ENCODE measurements at regions of chr2 and their contacts with region 1.

Region 1: GRCh38 chr2:64523666-64524603 is at the start of gene AFTPH:
- DNase-seq: peak; percentile 97
- ATAC-seq: peak; percentile 87
- H3K4me3 Mint-ChIP-seq: peak within 1 kb of the TSS; percentile 99
- H3K27ac Mint-ChIP-seq: peak within 1 kb of the TSS; percentile 100
- H3K4me1 Mint-ChIP-seq: peaks cover 46% of the 10 kb centered on the region
- H3K27me3 Mint-ChIP-seq: no peaks in the 10 kb centered on the region
- CTCF ChIP-seq: no peak
- total RNA-seq, gene AFTPH: 76.2 and 81.3 TPM in 2 replicates

Region 2: DNA sequence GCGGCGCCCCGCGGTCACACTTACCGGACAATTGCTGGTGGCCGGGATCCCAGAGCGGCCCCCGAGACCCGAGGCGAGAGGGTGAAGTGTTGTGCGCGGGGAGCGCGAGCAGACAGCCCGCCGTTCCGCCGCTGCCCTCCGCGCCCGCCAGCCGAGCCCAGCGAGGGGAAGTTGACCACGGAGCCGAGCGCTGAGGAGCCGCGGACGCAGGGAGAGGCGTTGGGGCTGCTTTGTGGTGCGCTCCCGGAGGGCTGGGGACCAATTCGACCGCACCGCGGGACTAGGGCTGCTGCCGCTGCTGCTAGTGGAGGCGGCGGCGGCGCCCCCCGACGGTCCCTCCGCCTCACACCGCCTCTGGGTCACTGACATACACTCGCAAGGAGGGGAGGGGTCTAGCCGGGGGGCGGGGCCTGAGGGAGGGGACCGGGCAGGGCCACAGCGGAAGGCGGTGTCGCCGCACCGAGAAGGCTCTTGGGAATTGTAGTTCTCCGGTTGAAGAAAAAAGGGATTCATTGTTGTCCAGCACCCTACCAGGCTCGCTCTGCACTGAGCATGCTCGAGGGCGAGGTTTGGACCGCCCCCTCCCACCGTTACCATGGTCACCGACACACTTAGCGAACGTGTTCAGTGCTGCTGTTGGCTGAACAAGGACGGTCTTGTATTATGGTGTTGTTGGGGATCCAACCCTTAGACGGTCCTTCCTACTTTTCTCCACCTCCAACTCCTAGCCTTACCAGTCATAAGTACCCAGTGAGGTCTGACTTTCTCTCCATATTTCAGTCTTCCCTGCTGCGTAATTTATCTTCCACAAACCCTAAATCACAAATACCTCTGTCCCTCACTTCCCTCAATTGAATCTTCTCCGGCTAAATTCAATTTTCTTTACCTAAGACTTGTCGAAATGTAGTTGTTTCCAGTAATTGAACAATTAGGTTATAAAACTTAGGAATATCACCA is 379.6 kb before region 1 on chr2 and contains the start of gene PELI1:
- CTCF ChIA-PET with region 1: no interaction called
- POLR2A ChIA-PET with region 1: no interaction called
- intact Hi-C with region 1: loop called (anchors 1 kb)
- DNase-seq: peak; percentile 83
- ATAC-seq: peak; percentile 95
- H3K4me3 Mint-ChIP-seq: peak within 1 kb of the TSS; percentile 96
- H3K27ac Mint-ChIP-seq: peak within 1 kb of the TSS; percentile 95
- H3K4me1 Mint-ChIP-seq: peaks cover 37% of the 10 kb centered on the region
- H3K27me3 Mint-ChIP-seq: no peaks in the 10 kb centered on the region
- CTCF ChIP-seq: no peak
- total RNA-seq, gene PELI1: 81.4 and 93.1 TPM in 2 replicates

Region 3: GRCh38 chr2:64562148-64562784 is 38.3 kb after region 1 on chr2:
- CTCF ChIA-PET with region 1: interaction called, 93 read pairs
- POLR2A ChIA-PET with region 1: interaction called, 13 read pairs
- intact Hi-C with region 1: loop called (anchors 1 kb)
- DNase-seq: no peak
- ATAC-seq: peak; percentile 52
- H3K4me3 Mint-ChIP-seq: no peak overlapping the region
- H3K27ac Mint-ChIP-seq: no peak overlapping the region
- H3K4me1 Mint-ChIP-seq: peaks cover 34% of the 10 kb centered on the region
- H3K27me3 Mint-ChIP-seq: no peaks in the 10 kb centered on the region
- CTCF ChIP-seq: no peak

Region 4: DNA sequence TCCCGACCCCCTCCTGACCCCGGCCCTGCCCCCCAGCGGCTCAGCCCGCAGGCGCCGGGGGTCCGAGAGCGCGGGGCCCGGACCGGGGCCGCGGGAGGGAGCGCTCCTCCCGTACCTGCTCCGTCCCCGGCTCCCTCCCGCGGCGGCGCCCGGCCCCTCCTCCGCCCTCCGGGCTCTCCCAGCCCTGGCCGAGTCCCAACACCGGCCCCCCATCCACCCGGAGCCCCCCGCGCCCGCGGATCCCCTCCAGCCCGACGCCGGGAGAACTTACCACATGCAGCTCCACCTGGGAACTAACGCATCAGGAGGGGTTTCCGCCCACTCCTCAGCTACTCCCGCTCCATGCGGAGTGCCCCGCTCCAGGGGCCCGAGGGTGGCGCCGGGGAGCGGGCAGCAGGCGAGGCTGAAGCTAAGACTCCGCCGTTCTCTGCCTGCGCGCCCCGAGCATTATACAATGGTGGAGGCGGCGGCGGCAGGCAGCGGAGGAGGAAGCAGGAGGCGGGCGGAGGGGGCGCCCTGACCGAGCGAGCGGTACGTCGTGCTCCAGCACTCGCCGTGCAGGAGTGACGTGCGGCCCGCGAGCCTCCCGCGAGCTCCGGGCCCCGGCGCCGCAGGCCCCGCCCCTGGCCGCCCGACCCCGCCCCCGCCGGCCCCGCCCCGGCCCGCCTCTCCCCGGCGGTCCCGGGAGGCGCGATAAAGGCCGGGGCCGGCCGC is 129.6 kb after region 1 on chr2 and contains the start of gene SERTAD2:
- CTCF ChIA-PET with region 1: interaction called, 5 read pairs
- POLR2A ChIA-PET with region 1: interaction called, 50 read pairs
- intact Hi-C with region 1: no loop called
- DNase-seq: peak; percentile 84
- ATAC-seq: peak; percentile 79
- H3K4me3 Mint-ChIP-seq: peak within 1 kb of the TSS; percentile 91
- H3K27ac Mint-ChIP-seq: peak within 1 kb of the TSS; percentile 93
- H3K4me1 Mint-ChIP-seq: peaks cover 82% of the 10 kb centered on the region
- H3K27me3 Mint-ChIP-seq: no peaks in the 10 kb centered on the region
- CTCF ChIP-seq: no peak
- total RNA-seq, gene SERTAD2: 45.6 and 47.3 TPM in 2 replicates

Region 5: DNA sequence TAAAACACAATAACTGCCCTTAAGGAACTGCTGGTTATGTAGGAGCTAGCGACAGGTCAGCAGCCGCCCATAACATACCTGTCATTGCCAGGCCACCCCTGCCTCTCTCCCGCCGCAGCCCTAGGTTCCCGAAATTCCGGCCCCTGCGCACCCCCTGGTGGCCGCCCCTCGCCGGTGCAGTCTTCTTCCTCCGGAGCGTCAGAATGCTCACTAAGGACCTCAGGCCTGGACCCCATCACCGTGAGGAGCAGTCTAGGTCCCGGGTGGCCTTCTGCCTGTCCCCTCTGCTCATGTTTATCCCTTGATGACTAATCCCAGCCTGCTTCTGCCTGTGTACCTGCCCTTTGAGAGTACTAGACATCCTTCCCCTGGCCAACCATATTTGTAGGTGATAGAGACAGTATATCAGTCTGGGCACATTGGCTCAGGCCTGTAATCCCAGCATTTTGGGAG is 349.6 kb after region 1 on chr2:
- CTCF ChIA-PET with region 1: interaction called, 13 read pairs
- POLR2A ChIA-PET with region 1: interaction called, 7 read pairs
- intact Hi-C with region 1: loop called (anchors 1 kb)
- DNase-seq: peak; percentile 86
- ATAC-seq: peak; percentile 99
- H3K4me3 Mint-ChIP-seq: peak overlapping the region; percentile 52
- H3K27ac Mint-ChIP-seq: no peak overlapping the region
- H3K4me1 Mint-ChIP-seq: peaks cover 8% of the 10 kb centered on the region
- H3K27me3 Mint-ChIP-seq: no peaks in the 10 kb centered on the region
- CTCF ChIP-seq: peak; percentile 90

Region 6: DNA sequence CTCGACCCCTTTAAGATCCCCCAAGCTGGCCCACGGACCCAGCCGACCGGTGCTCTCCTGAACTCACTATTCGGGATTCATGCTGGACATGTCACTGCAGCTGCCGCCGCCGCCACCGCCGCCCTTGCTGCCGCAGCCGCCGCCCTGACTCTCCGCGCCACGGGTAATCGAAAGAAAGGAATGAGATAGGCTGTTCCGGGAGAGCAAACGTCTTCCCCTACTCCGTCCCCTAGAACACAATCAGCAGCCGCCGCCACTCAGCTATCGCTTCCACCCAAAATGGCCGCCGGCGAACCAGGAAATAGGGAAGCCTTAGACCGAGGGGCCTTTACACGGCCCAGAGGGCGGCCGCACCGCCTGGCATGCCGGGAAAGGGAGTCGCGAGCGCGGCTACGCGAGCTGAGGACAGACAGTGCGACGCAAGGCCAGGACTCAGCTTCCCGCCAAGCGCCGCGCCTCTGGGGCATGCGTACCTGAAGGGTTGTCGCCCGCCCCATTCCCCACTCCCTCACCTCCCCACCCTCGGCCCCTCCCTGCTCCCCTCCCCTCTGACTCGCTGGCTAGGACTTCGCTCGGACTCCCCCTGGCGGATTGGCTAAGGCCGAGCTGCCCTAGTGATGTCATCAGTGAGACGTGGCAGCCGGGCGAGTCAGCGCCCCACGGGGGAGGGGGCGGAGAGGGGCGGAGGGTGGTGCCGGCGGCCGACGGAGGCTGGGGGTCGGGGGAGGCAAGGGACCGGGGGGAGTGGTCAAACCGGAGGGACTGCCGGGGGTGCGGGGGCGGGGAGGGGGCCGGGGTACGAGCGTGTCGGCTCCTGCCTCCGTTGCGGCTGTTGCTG is 606.1 kb after region 1 on chr2 and contains the start of gene RAB1A:
- CTCF ChIA-PET with region 1: interaction called, 4 read pairs
- POLR2A ChIA-PET with region 1: interaction called, 8 read pairs
- intact Hi-C with region 1: loop called (anchors 1 kb)
- DNase-seq: peak; percentile 91
- ATAC-seq: peak; percentile 93
- H3K4me3 Mint-ChIP-seq: peak within 1 kb of the TSS; percentile 100
- H3K27ac Mint-ChIP-seq: peak within 1 kb of the TSS; percentile 100
- H3K4me1 Mint-ChIP-seq: peaks cover 49% of the 10 kb centered on the region
- H3K27me3 Mint-ChIP-seq: no peaks in the 10 kb centered on the region
- CTCF ChIP-seq: no peak
- total RNA-seq, gene RAB1A: 45.0 and 46.4 TPM in 2 replicates

Measured in activated B cell treated with CpG ODN at 0.5 μM for 24 hours (primary cell).